Activated T-helper 1 cell treated with anti-CD3 and anti-CD28 coated beads, Interleukin-12 subunit alpha, Interleukin-12 subunit beta, Interleukin-2, Interleukin-4 antibody, amounts not matched to agents 30 ng/mL and 10 ng/mL and 1 ng/mL, durations not matched to agents 14 hours and 24 hours and 36 hours (primary cell): ENCODE measurements at regions of chr11 and their contacts with region 1.

Region 1: DNA sequence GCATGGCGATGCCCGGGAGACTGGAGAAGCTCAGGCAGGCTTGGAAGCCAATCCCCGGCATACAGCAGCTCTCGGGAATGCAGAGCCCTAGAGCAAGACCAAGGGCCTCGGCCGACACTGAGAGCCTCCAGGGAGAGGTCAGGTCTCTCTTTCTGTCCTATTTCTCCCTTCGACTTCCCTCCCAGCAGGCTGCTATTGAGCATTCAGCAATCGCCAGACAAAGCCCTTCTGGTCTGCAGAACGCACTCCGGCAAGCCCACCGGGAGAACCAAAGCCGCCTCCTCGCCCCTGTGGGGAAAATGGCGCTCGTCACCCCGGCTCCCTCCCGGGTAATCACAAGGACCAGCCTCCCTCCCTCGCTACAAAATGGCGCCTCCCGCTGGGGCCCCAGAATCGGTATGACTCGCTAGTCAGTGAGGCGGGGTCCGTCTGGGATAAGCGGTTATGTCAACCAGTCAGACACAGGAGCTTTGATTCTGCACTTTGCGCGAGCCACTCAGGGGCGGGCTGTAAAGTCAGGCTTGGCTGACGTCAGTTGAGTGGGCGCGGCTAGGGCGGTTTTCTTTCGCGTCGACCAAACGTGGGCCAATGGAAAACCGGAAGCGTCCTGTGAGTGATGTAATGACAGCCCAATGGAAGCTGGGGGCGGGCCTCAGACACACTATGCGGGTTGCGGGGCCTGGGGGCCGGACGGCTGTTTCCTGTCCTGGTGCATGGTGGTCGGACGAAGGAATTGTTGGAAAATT is at the start of gene ZNF143:
- DNase-seq: peak; percentile 100
- H3K4me3 Mint-ChIP-seq: peak within 1 kb of the TSS; percentile 98
- H3K27ac Mint-ChIP-seq: peak within 1 kb of the TSS; percentile 97
- H3K4me1 Mint-ChIP-seq: peaks cover 27% of the 10 kb centered on the region
- H3K27me3 Mint-ChIP-seq: no peaks in the 10 kb centered on the region
- total RNA-seq, gene ZNF143: 30.3 and 30.7 TPM in 2 replicates

Region 2: GRCh38 chr11:8964324-8965320 is 495.9 kb before region 1 on chr11 and contains the start of gene TMEM9B:
- intact Hi-C with region 1: loop called (anchors 1 kb)
- DNase-seq: peak; percentile 79
- H3K4me3 Mint-ChIP-seq: peak within 1 kb of the TSS; percentile 99
- H3K27ac Mint-ChIP-seq: peak within 1 kb of the TSS; percentile 95
- H3K4me1 Mint-ChIP-seq: peaks cover 31% of the 10 kb centered on the region
- H3K27me3 Mint-ChIP-seq: no peaks in the 10 kb centered on the region
- total RNA-seq, gene TMEM9B: 27.0 and 31.3 TPM in 2 replicates

Region 3: GRCh38 chr11:9250139-9250582 is 210.3 kb before region 1 on chr11:
- intact Hi-C with region 1: loop called (anchors 1 kb)
- DNase-seq: peak; percentile 36
- H3K4me3 Mint-ChIP-seq: peak overlapping the region; percentile 38
- H3K27ac Mint-ChIP-seq: peak overlapping the region; percentile 50
- H3K4me1 Mint-ChIP-seq: peaks cover 61% of the 10 kb centered on the region
- H3K27me3 Mint-ChIP-seq: peaks cover 1% of the 10 kb centered on the region

Region 4: DNA sequence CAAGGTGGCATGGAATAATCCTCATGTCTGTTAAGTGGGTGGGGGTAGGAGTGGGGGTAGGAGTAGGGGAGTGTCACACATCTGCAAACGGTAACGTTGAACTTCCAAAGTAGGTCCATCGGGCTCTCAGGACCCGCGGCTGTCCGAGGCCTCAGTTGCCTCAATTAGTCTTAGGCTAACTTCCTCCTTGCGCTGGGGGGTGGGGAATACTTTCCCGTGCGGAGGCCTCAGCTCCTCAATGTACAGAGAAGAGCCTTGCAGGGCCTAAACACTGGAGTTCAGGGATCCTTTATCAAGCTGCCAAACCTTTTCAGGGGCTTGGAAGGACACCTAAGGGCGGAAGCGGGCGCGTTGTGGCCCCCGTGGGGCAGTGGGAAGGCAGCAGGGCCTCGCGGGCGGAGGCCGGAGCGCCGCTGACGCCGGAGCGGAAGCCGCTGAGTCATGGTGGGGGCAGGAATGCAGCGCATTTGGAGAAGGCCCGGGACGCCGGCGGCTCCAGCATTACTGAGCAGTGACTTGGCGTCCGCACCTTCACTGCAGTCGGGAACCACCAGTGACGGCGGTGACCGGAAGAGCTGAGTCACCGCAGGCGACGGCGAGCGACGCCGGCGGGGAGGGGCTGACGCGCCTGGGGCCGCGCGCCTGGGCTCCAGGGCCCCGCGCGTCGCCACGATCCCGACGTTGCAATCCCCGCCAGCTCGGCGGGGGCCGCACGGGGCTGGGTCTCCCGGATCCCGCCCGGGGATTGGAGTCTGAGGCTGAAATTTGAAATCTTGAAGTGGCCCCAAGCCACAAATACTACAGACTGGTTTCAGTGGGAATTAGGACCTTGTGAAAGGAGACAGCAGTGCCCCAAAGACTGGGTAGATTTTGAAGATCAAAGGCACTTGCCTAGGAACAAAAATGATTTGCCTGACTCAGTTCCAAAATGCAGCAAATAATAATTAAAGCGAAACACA is 96.3 kb before region 1 on chr11:
- intact Hi-C with region 1: loop called (anchors 1 kb)
- DNase-seq: peak; percentile 76
- H3K4me3 Mint-ChIP-seq: peak overlapping the region; percentile 82
- H3K27ac Mint-ChIP-seq: peak overlapping the region; percentile 90
- H3K4me1 Mint-ChIP-seq: peaks cover 28% of the 10 kb centered on the region
- H3K27me3 Mint-ChIP-seq: peaks cover 5% of the 10 kb centered on the region

Region 5: DNA sequence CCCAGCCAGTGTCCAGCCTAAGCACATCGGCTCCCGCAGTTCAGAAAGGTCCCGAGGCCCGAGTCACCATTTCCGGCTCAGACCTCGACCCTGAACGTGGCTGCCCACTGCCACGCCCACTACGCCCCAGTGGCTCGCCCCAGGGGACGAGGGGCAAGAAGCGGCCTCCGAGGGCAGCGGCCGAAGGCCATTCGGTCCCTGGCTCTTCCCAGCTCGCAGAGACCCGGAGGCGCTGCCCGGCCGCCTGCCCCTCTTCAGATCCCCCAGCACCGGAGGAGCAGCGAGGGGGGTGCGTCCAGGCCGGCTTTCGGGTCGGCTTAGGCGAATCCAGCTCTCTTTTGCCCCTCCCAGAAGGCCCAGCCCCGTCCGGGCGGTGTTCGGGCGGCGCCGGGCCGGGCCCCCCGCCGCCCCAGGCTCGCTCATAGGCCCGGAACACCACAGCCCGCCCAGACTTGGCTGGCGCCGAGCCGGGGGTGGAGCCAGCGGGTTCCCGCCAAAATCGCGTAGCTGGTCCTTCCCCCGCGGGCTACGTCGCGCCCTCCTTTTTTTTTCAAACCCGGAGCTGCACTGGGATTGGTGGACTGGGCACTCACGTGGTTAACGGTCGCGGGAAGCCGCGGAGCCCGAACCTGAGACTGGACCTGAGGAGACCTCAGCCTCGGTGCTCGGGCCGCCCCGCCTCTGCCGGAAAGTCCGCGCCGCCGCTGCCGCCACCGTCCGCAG is 112.7 kb after region 1 on chr11 and contains the start of gene WEE1:
- intact Hi-C with region 1: loop called (anchors 1 kb)
- DNase-seq: peak; percentile 99
- H3K4me3 Mint-ChIP-seq: peak within 1 kb of the TSS; percentile 93
- H3K27ac Mint-ChIP-seq: peak within 1 kb of the TSS; percentile 88
- H3K4me1 Mint-ChIP-seq: peaks cover 42% of the 10 kb centered on the region
- H3K27me3 Mint-ChIP-seq: peaks cover 7% of the 10 kb centered on the region
- total RNA-seq, gene WEE1: 51.4 and 54.2 TPM in 2 replicates

Region 6: DNA sequence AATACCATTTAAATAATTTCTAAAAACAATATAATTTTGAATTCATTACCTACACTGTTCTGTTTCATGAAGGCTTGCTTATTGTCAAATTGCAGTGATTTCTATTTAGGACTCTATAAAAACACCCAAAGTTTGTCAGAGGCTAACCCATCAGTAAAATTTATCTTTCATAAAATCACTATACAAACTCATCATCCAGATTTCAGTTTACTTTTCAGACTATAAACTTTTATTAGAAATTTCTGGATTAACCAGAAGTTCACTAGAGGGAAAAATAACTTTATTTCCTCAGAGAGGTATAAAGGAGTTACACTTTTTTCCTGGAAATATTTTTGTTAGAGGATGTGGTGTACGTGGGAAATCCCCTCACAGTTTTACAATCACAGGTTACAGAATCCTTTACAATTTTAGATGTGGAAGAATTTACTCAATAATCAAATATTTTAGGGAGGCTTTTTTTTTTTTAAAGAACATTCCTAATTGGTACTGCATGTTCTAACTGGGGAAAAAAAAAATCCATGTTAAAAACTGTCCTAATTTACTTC is 380.0 kb after region 1 on chr11:
- intact Hi-C with region 1: loop called (anchors 5 kb)
- DNase-seq: peak; percentile 5
- H3K4me3 Mint-ChIP-seq: peak overlapping the region; percentile 2
- H3K27ac Mint-ChIP-seq: peak overlapping the region; percentile 19
- H3K4me1 Mint-ChIP-seq: peaks cover 46% of the 10 kb centered on the region
- H3K27me3 Mint-ChIP-seq: no peaks in the 10 kb centered on the region

Region 7: DNA sequence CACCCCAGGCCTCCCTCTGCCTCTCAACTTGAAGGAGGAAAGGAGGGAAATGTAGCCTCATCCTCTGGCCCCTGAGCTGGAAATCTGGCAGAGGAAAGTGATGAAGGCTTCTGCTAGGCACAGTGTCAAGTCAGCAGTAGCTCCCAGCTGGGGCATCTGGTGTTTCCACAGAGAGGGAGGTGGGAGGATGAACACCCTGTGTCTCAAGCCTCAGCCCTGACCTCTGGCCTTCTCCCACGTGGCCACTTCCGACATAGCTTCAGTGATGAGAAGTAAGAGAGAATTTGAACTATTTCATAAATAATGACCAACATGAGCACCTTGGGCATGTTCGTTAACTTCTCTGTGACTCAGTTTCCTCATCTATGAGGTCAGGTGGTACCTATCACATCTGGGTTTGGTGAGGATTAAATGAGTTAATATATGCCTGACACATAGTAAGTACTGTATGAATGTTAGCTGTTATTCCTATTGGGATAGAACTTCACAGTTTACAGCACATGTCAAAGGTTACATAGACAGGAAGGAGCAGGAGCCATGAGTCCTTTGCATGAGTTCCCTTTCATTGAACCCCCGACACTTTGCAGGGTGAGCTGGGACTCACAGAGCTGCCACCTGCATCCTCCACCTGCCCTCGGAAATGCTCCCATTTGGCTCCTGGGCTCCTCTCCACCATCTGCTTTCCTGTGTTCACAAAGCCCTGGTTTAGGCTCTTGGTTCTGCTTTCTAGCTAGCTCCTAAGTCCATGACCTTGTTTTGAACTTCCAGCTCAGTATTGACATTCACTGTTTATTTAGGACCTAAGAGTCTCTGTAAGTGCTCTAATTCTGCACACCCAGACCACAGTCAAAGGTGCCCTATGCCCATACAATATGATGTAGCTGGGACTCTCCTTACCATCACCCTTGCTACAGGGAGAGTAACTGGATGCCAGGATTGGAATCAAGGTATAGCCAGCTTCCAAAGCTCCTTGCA is 1830.8 kb after region 1 on chr11:
- intact Hi-C with region 1: no loop called
- DNase-seq: no peak
- H3K4me3 Mint-ChIP-seq: no peak overlapping the region
- H3K27ac Mint-ChIP-seq: no peak overlapping the region
- H3K4me1 Mint-ChIP-seq: no peaks in the 10 kb centered on the region
- H3K27me3 Mint-ChIP-seq: no peaks in the 10 kb centered on the region